ENCODE measurements at regions of chr14 and their contacts with region 1.

Region 1: GRCh38 chr14:61934385-61934784 is 172.2 kb downstream of the SNAPC1 start:
- DNase-seq: peak; percentile 99
- ATAC-seq: peak; percentile 91
- H3K4me3 ChIP-seq: no peak overlapping the region
- H3K27ac ChIP-seq: peak overlapping the region; percentile 12; the same call in 1 of the 2 replicates
- H3K4me1 ChIP-seq: peaks cover 12% of the 10 kb centered on the region
- H3K27me3 ChIP-seq: no peaks in the 10 kb centered on the region
- CTCF ChIP-seq: no peak
- POLR2A ChIP-seq: no peak
- RAD21 ChIP-seq: no peak

Region 2: DNA sequence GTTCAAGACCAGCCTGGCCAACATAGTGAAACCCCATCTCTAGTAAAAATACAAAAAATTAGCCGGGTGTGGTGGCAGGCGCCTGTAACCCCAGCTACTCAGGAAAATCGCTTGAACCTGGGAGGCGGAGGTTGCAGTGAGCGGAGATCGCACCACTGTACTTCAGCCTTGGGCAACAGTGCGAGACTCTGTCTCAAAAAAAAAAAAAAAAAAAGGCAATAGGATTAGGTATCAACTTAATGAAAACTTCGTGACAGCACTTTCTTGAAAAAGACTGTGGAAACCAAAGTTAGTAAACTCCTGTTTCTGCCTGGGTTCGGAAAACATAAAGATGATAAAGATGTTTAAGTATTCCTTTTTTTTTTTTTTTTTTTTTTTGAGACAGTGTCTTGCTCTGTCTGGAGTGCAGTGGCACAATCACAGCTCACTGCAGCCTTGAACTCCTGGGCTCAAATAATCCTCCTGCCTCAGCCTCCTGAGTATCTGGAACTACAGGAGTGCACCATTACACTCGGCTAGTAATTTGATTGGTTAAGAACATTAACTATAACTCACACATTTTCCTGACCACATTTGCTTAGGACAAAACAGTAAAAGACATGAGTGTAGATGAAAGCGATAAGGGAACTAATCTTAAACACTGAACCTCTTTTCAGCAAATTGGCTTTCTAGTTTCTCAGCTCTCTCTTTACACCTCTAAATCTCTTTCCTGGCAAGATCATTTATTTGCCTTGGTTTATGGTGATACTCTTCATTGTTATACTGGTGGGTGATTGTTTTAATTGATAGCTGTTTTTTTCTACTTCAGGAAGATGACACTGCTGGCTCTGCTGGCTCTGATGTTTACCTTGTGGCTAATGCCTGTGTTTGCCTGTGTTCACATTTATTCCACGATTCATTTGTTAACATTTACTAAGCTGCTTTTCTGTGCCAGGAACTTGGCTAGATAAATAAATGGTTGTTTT is 223.2 kb before region 1 on chr14:
- CTCF ChIA-PET with region 1: no interaction called
- POLR2A ChIA-PET with region 1: no interaction called
- dilution Hi-C with region 1: no loop called
- in situ Hi-C with region 1: no loop called
- intact Hi-C with region 1: no loop called
- DNase-seq: no peak
- ATAC-seq: peak; percentile 28; the same call in 1 of the 2 replicates
- H3K4me3 ChIP-seq: no peak overlapping the region
- H3K27ac ChIP-seq: no peak overlapping the region
- H3K4me1 ChIP-seq: peaks cover 14% of the 10 kb centered on the region
- H3K27me3 ChIP-seq: no peaks in the 10 kb centered on the region
- CTCF ChIP-seq: no peak
- POLR2A ChIP-seq: no peak
- RAD21 ChIP-seq: no peak

Region 3: DNA sequence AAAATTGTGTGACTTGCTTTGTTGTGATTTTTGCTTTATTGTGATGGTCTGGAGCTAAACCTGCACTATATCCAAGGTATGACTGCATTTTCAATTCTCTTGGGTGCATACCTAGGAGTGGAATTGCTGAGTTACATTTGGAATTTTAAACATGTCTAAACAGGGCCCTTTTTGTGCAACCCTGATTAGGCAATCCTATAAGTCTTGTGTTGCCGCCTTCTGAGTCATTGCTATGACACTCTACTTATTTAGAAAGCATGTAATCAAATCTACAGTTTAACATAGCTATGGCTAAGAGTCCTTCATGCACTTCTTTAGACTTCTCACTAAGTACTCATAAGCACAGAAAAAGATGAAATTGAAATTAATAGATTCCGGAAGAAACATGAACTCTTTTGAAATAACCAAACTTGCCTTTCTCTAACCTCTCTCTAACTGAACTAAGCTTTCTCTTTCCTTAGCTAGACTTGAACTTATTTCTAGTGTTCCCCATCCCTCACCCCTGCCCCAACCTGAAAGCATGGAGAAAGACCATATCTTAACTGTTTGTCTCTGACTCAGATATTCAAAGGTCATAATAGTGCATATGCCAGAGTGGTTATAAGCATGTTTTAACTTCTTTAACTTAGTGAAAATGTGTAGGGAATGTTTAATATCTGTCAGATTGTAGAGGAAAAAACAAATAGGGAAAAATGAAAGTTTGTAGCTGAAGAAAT is 30.8 kb after region 1 on chr14:
- CTCF ChIA-PET with region 1: no interaction called
- POLR2A ChIA-PET with region 1: no interaction called
- dilution Hi-C with region 1: no loop called
- in situ Hi-C with region 1: no loop called
- intact Hi-C with region 1: loop called (anchors 2 kb)
- DNase-seq: peak; percentile 97
- ATAC-seq: peak; percentile 91
- H3K4me3 ChIP-seq: peak overlapping the region; percentile 1; the same call in 1 of the 2 replicates
- H3K27ac ChIP-seq: peak overlapping the region; percentile 97
- H3K4me1 ChIP-seq: peaks cover 9% of the 10 kb centered on the region
- H3K27me3 ChIP-seq: no peaks in the 10 kb centered on the region
- CTCF ChIP-seq: no peak
- POLR2A ChIP-seq: no peak
- RAD21 ChIP-seq: no peak